GM13976 (cell line): ENCODE measurements at regions of chr16 and their contacts with region 1.

Region 1: GRCh38 chr16:80540516-80541272 is at the start of gene DYNLRB2:
- DNase-seq: peak; percentile 96
- CTCF ChIP-seq: no peak

Region 2: DNA sequence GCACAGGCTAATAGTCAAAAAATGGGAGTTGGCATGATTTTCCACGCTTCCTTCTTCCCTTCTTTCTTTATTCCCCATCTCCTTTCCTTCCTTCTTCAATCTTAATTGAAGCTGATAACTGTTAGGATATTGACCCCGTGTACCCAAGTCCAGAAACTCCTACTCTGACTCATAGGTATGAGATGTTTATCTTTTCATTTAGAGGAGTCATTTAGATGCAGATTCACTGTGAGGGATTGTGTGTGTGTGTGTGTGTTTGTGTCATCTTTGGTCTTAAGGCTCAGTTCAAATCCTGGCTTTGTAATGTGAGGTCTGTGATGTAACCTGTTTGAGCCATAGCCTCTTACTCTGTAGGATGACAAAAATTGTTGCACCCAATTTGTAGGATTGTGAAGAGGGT is 608.1 kb before region 1 on chr16:
- in situ Hi-C with region 1: no loop called
- DNase-seq: no peak
- CTCF ChIP-seq: no peak

Region 3: GRCh38 chr16:80197741-80198201 is 342.9 kb before region 1 on chr16:
- in situ Hi-C with region 1: no loop called
- DNase-seq: no peak
- CTCF ChIP-seq: no peak

Region 4: GRCh38 chr16:80804056-80804450 is 263.4 kb after region 1 on chr16:
- in situ Hi-C with region 1: loop called (anchors 10 kb)
- DNase-seq: peak; percentile 62
- CTCF ChIP-seq: no peak